Left colon (tissue), 2 donors: ENCODE measurements at regions of chr17 and their contacts with region 1.

Region 1: DNA sequence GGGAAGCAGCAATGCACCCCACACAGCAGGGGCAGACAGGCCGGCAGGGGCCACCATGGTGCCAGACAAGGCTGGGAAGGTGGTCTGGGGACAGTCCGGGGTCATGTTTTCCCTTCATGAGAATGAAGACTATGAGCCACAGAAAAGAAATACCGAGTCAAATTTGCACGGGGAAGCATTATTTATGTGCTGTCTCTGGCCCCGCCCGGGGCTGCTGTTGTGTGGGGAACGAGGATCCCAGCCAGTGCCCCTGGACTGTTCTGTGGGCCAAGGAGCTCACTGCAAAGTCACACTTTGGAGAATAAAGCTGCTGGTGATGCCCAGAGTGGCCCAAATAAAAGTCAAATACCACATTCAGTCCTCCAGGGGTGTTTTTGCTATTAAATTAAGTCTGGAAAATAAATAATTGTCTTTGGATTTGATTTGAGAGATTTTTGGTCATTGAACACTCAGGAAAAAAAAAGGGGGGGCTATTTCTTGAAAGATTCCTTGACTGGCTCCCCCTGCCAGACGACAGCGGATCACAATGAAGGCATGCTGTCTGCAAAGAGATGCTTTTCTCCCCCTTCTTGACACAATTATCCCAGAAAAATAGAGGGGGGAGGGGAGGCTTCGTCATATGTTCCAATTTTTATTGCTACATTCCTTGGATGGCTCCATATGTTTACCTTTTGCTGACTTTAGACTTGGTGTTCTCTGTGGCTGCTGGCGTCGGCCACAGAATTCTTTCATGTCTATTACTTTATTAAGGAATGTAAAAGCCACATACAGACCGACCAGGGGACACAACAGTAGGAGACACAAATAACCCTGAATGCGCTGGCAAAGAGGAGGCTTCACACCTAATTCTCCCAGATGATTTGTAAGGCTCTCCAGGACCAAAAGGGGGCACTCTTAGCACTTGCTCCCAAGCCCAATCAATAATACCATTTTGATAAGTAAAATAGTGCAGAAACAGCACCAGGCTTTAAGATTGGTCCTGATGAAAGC is 27.1 kb upstream of the ANKFN1 start:
- DNase-seq: no peak
- ATAC-seq: no peak

Region 2: DNA sequence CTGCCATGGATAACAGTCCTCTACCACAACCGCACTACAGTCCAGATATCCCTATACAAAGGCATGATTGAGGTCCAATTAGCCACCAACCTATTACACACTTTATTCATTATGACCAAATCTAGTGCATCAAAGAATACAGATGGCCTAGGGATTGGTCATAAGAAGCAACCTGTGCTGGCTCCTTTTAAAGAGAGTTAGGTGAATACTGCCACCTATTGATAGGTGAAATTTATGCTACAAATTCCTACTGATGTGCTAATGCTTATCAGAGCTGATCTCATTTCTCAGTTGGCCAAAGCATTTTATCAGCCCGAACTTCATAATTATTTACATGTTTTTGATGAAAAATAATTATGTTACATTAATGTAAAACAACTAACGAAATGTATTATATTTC is 193.4 kb after region 1 on chr17:
- intact Hi-C with region 1: loop called in 1 of 2 experiments (anchors 10 kb)
- DNase-seq: no peak
- ATAC-seq: peak; percentile 62